Activated CD8-positive, alpha-beta memory T cell treated with anti-CD3 and anti-CD28 coated beads, Interleukin-2, amount 10 ng/mL, durations not matched to agents 7 days and 5 days (primary cell): ENCODE measurements at regions of chr11 and their contacts with region 1.

Region 1: GRCh38 chr11:10792398-10792975 is 16.2 kb downstream of the EIF4G2 start:
- DNase-seq: peak; percentile 89
- ATAC-seq: peak; percentile 90
- H3K4me3 Mint-ChIP-seq: no peak overlapping the region
- H3K27ac Mint-ChIP-seq: no peak overlapping the region
- H3K4me1 Mint-ChIP-seq: peaks cover 21% of the 10 kb centered on the region
- H3K27me3 Mint-ChIP-seq: peaks cover 16% of the 10 kb centered on the region

Region 2: DNA sequence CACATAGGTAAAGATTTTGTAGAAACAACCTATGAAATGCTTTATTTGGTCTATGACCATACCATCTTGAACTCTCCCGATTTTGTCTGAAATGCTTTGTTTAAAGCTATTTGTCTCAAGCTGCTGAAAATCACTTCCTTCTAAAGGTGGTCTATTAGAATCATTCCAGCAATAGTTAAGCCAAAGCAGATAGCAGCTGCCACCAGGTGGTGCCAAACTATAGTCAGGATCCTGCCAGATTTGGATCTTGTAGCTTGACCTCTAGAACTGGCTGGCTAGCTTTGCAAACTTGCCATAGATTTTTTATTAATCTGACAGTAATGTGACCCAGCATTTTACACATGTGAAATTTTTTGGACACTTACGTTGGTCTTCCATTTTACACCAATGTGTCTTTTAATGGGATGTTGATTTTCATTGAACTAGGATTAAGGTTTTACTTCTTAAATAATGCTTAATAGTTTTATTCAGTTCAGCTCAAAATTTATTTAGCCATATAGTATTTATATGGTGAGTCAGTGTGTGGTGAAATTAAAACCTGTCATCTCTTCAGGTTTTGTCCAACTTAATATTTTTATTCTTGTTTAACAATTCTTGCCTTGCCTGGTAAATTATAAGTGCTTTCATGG is 21.7 kb before region 1 on chr11:
- CTCF ChIA-PET with region 1: interaction called, 50 read pairs
- DNase-seq: peak; percentile 50
- ATAC-seq: no peak
- H3K4me3 Mint-ChIP-seq: no peak overlapping the region
- H3K27ac Mint-ChIP-seq: no peak overlapping the region
- H3K4me1 Mint-ChIP-seq: peaks cover 2% of the 10 kb centered on the region
- H3K27me3 Mint-ChIP-seq: no peaks in the 10 kb centered on the region

Region 3: DNA sequence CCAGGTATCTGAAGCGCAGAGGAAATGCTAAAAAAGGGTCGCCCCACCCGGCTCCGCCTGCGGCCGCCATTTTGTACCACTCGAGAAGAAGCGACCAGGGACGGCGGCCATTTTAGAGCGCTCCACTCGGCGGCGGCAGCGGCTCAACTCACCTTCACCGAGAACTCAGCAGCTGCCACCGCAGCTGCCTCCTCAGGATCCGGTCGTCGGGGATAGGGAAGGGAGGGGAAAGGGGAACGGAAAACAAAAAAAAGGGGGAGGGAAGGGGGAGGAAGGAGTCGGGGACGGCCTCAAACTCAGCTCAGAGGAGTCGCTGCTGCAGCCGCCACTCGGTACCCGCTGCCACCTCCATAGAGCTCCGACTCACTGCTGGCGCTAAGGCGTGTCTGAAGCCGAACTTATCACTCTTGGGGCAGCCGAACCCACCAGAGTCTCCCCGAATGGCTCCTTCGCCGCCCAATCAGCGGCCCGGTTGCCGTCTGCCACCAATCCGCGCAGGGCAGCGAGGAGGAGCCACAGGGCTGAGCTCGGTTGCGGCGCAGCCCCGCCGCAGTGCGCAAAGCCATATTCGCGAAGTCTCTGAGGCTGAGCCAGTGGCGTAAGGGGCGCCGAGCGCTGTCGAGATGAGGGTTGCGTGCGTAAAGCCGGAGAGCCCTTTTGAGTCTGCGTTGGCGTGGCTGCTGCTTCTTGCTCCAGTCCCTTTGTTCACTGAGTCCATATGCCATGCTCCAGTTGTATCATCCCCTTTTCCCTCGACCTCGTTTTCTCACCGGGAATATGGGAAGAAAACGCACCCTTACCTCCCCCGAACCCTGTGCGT is 16.3 kb after region 1 on chr11 and contains the start of gene EIF4G2:
- CTCF ChIA-PET with region 1: interaction called, 38 read pairs
- DNase-seq: peak; percentile 98
- ATAC-seq: peak; percentile 93
- H3K4me3 Mint-ChIP-seq: peak within 1 kb of the TSS; percentile 86
- H3K27ac Mint-ChIP-seq: peak within 1 kb of the TSS; percentile 99
- H3K4me1 Mint-ChIP-seq: peaks cover 42% of the 10 kb centered on the region
- H3K27me3 Mint-ChIP-seq: no peaks in the 10 kb centered on the region
- total RNA-seq, gene EIF4G2: 579 to 898 TPM

Region 4: DNA sequence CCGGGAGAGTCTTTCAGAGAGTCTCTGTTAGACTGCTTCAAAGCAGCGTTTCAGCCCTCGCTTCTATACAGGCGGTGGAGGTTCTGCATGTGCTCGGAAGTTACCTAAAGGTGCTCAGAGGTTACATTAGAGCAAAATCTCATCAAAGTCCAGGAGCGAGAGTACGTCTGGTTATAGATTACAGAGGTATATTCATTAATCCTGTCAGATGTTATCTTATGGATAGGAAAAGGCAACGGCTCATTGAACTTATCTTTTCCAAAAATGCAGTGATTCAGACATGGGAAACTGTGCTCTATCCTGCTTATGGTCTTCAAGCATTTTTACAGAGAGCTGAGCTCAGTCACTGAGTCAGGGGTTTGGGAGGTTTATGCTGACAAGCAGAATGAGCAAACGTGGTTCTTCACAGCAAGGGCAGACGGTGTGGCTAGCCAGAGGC is 74.4 kb after region 1 on chr11:
- CTCF ChIA-PET with region 1: no interaction called
- DNase-seq: no peak
- ATAC-seq: no peak
- H3K4me3 Mint-ChIP-seq: no peak overlapping the region
- H3K27ac Mint-ChIP-seq: no peak overlapping the region
- H3K4me1 Mint-ChIP-seq: peaks cover 23% of the 10 kb centered on the region
- H3K27me3 Mint-ChIP-seq: no peaks in the 10 kb centered on the region

Region 5: DNA sequence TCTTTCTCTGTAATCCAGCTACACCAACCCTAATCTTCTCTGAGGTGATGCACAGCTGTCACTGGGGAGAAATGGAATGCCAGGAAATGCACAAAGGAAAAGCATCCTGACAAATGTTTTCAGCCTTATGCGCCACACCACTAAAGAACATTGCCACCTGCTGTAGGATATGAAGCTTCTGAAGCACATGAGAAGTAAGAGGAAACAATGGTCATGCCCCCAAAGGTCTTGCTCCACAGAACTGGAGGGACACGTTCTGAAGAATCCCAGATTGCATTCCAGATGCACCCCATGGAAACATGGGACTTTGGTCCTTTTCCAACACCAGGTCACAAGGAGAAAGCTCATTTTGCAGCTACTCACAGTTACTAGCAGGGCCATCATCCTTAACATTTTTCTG is 114.0 kb after region 1 on chr11:
- CTCF ChIA-PET with region 1: interaction called, 11 read pairs
- DNase-seq: no peak
- ATAC-seq: no peak
- H3K4me3 Mint-ChIP-seq: no peak overlapping the region
- H3K27ac Mint-ChIP-seq: no peak overlapping the region
- H3K4me1 Mint-ChIP-seq: no peaks in the 10 kb centered on the region
- H3K27me3 Mint-ChIP-seq: peaks cover 11% of the 10 kb centered on the region

Region 6: DNA sequence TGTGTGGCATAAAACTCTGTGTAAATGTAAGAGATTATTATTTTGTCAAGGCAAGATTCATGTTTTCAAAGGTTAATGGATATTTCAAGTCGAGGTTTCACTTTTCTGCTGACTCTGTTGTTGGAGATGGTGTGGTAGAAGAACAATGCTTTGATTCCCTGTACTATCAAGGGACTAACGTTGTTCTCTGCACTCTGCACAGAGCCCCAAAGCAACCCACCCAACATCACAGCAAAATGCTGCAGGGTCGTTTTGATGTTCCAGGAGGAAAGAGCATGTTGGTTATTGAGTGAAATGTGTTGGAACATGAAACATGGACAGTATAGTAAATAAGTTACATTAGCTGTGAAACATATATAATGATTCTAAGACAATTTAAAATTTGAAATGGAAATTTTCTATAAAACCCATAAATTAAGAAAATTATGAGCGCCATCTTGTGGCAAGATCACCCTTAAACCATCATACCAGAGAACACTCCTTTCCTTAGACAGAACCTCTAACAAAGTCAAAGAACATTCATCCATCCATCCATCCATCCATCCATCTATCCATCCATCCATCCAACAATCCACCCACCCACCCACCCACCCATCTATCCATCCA is 229.7 kb after region 1 on chr11:
- CTCF ChIA-PET with region 1: interaction called, 33 read pairs
- DNase-seq: no peak
- ATAC-seq: no peak
- H3K4me3 Mint-ChIP-seq: no peak overlapping the region
- H3K27ac Mint-ChIP-seq: no peak overlapping the region
- H3K4me1 Mint-ChIP-seq: peaks cover 1% of the 10 kb centered on the region
- H3K27me3 Mint-ChIP-seq: no peaks in the 10 kb centered on the region

Region 7: DNA sequence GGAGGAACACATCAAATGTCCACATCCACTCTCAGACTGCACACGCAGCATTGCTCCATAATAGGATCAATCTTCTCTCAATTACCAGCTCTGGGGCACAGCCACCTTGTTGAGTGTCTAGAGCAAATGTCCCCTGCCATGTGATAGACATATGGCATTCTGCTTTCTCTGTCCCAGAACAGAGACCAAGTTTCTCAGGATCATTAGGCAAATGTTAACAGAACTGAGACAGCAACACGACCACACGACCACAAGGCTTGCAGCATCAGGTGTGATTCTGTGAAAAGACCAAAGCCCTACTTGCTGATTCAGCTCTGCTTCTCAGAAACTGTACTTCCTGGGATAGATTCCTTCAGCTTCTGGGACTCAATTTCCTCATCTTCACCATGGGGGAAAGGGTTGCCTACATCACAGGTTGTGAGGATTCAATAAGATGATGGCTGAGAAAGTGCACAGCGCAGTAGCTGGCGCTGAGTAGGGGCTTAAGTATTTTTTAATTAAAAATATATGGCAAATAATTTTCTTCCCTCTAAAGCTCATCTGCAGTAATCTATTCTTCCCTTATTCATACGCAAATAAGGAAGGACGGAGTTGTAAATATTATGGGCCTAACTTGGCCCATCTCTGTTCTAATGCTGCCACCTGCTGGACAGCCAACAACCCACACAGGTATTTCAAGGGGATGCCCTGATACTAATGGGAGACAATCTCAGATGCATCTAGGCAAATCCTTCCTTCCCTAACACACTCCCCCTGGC is 995.0 kb after region 1 on chr11:
- CTCF ChIA-PET with region 1: interaction called, 12 read pairs
- DNase-seq: peak; percentile 73
- ATAC-seq: peak; percentile 85
- H3K4me3 Mint-ChIP-seq: no peak overlapping the region
- H3K27ac Mint-ChIP-seq: no peak overlapping the region
- H3K4me1 Mint-ChIP-seq: peaks cover 12% of the 10 kb centered on the region
- H3K27me3 Mint-ChIP-seq: peaks cover 19% of the 10 kb centered on the region